ENCODE measurements at regions of chr22 and their contacts with region 1.

Region 1: DNA sequence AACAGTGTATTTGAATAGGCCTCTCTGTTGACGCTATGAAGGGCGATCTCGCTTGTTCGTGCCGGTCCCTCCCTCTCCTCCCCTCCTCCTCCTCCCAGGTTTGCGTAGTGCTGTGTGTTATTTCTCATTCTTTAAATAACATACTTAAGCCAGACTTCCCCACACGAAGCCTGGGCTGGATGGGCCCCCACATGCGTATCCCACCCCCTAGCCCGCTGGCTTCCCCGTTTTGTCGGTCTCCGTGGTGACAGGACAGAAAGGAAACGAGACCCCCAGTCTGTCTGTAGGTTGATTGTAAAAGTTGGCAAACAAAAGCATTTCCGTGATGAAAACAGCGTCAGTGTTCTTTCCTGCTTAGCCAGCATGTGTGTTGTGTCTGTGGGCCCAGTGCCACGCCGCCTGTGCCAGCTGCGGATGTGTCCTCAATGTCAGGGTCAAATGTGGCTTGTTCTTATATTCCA is 27.3 kb downstream of the FAM118A start:
- DNase-seq: peak; percentile 60 to 87
- H3K4me3 ChIP-seq: peak overlapping the region in 1 of 2 donors; percentile 50
- H3K27ac ChIP-seq: peak overlapping the region; percentile 54 to 73
- H3K4me1 ChIP-seq: peaks cover 12 to 30% of the 10 kb centered on the region in 2 donors
- H3K27me3 ChIP-seq: no peaks in the 10 kb centered on the region
- CTCF ChIP-seq: no peak

Region 2: GRCh38 chr22:45268958-45269844 is 67.8 kb before region 1 on chr22:
- intact Hi-C with region 1: loop called (anchors 10 kb)
- DNase-seq: peak in 1 of 2 donors; percentile 91
- H3K4me3 ChIP-seq: peak overlapping the region; percentile 70 to 72
- H3K27ac ChIP-seq: peak overlapping the region in 1 of 2 donors; percentile 17
- H3K4me1 ChIP-seq: peaks cover 8 to 27% of the 10 kb centered on the region in 2 donors
- H3K27me3 ChIP-seq: no peaks in the 10 kb centered on the region
- CTCF ChIP-seq: peak; percentile 74 to 97 (median 83)

Region 3: DNA sequence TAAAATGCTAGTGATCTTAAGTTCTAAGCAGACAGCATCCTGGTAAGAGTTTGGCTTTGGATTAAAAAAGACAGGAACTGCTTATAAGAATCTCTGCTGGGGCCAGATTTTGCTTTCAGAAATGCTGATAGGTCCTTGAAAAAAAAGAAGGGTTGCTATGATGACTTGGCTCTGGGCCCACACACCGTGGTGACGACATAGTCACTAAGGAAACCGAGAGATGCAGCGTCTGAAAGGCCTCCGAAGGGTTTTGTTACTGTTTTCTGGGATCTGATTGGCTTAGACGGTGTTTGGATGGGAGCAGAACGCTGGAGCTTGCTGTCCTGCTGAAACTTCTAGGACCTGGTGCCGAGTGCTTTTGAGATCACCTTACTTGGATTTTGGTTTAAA is 18.8 kb before region 1 on chr22:
- intact Hi-C with region 1: loop called (anchors 1 kb)
- DNase-seq: peak; percentile 80 to 96
- H3K4me3 ChIP-seq: peak overlapping the region; percentile 35 to 45
- H3K27ac ChIP-seq: peak overlapping the region; percentile 96
- H3K4me1 ChIP-seq: peaks cover 11 to 50% of the 10 kb centered on the region in 2 donors
- H3K27me3 ChIP-seq: no peaks in the 10 kb centered on the region
- CTCF ChIP-seq: no peak

Region 4: DNA sequence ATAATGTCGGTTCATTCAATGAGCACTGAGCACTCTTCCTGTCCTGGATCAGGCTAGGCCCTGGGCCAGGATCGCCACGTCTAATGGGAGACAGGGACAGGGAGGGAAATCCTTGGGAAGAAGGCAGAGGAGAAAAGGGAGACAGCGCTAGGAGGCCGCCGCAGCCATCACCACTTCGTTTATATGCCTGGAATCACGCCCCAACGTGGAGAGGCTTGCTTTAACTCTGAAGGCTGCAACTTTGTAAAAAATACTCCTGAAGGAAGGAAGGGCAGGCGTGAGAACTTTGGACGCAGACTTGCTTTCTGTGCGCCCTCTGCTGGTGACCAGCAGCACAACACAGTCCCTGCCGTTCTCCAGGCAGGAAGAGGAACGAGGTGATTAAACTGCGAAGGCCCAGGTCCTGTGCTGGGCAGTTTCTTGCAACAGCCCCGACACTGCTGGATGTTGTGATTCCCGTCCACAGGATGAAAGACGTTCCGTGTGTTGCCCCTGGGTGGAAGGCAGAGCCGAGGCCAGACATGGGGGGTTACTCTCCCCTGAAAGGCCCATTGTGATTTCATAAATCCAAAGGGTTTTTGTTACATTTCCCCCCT is 98.6 kb after region 1 on chr22:
- intact Hi-C with region 1: loop called (anchors 5 kb)
- DNase-seq: peak; percentile 50 to 94
- H3K4me3 ChIP-seq: peak overlapping the region in 1 of 2 donors; percentile 42
- H3K27ac ChIP-seq: peak overlapping the region; percentile 63 to 75
- H3K4me1 ChIP-seq: peaks cover 0 to 4% of the 10 kb centered on the region in 2 donors
- H3K27me3 ChIP-seq: no peaks in the 10 kb centered on the region
- CTCF ChIP-seq: peak; percentile 92 to 97 (median 96)

Measured in ascending aorta (tissue), 2 donors.